Mammary epithelial cell (primary cell): ENCODE measurements at regions of chr7 and their contacts with region 1.

Region 1: GRCh38 chr7:76201730-76202665 is at the start of gene SRRM3:
- DNase-seq: peak; percentile 48
- H3K4me3 ChIP-seq: no peak within 1 kb of the TSS
- H3K27ac ChIP-seq: no peak within 1 kb of the TSS
- H3K4me1 ChIP-seq: no peaks in the 10 kb centered on the region
- H3K27me3 ChIP-seq: no peaks in the 10 kb centered on the region
- CTCF ChIP-seq: peak; percentile 47 to 66
- total RNA-seq, gene SRRM3: 0.17 to 1.3 TPM

Region 2: GRCh38 chr7:75993689-75994387 is 208.2 kb before region 1 on chr7:
- CTCF ChIA-PET with region 1: no interaction called
- dilution Hi-C with region 1: no loop called
- in situ Hi-C with region 1: no loop called
- intact Hi-C with region 1: no loop called
- DNase-seq: peak; percentile 20
- H3K4me3 ChIP-seq: peak overlapping the region; percentile 86 to 92 (median 90)
- H3K27ac ChIP-seq: no peak overlapping the region
- H3K4me1 ChIP-seq: peaks cover 9% of the 10 kb centered on the region
- H3K27me3 ChIP-seq: no peaks in the 10 kb centered on the region
- CTCF ChIP-seq: no peak

Region 3: DNA sequence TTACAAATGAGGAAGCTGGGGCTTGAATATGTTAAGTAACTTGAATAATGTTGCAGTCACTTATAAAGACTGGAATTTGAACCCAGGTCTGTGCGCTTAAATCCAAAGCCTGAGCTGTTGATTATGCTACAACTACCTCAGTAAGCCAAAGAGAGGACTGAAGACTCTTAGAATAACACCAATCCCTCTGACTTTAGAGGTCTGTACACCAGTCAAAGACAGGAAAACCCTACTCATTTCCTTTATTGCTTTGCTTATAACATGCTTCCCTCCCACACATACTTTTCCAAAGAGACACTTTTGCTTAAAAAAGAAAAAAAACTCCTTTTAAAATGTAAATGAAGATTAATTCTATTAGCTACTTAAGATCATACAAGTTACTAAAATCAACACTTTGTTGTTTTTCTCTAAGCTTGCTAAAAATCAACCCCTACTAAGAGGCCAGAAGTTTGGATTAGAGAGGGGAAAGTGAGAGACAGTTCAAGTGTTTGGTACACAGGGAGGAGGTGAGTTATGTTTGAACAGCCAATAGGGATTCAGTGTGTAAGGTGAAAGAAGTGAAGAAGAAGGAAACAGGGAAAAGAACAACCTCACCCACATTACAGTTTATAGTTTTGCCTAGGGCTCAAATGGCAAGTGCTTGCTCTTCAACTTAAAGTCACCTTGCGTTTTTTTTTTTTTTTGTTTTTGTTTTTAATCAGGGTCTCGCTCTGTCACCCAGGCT is 79.3 kb before region 1 on chr7:
- CTCF ChIA-PET with region 1: no interaction called
- dilution Hi-C with region 1: loop called (anchors 10 kb)
- in situ Hi-C with region 1: no loop called
- intact Hi-C with region 1: no loop called
- DNase-seq: no peak
- H3K4me3 ChIP-seq: no peak overlapping the region
- H3K27ac ChIP-seq: no peak overlapping the region
- H3K4me1 ChIP-seq: no peaks in the 10 kb centered on the region
- H3K27me3 ChIP-seq: no peaks in the 10 kb centered on the region
- CTCF ChIP-seq: no peak

Region 4: GRCh38 chr7:76244781-76245391 is 42.9 kb after region 1 on chr7:
- CTCF ChIA-PET with region 1: no interaction called
- dilution Hi-C with region 1: loop called (anchors 5 kb)
- in situ Hi-C with region 1: no loop called
- intact Hi-C with region 1: no loop called
- DNase-seq: no peak
- H3K4me3 ChIP-seq: no peak overlapping the region
- H3K27ac ChIP-seq: no peak overlapping the region
- H3K4me1 ChIP-seq: no peaks in the 10 kb centered on the region
- H3K27me3 ChIP-seq: no peaks in the 10 kb centered on the region
- CTCF ChIP-seq: no peak

Region 5: GRCh38 chr7:76302347-76303201 is 100.6 kb after region 1 on chr7 and contains the start of gene HSPB1:
- CTCF ChIA-PET with region 1: no interaction called
- dilution Hi-C with region 1: loop called (anchors 5 kb)
- in situ Hi-C with region 1: no loop called
- intact Hi-C with region 1: no loop called
- DNase-seq: peak; percentile 95
- H3K4me3 ChIP-seq: peak within 1 kb of the TSS; percentile 65 to 91 (median 78)
- H3K27ac ChIP-seq: peak within 1 kb of the TSS; percentile 66
- H3K4me1 ChIP-seq: peaks cover 57% of the 10 kb centered on the region
- H3K27me3 ChIP-seq: no peaks in the 10 kb centered on the region
- CTCF ChIP-seq: no peak
- total RNA-seq, gene HSPB1: 523 to 862 TPM

Region 6: DNA sequence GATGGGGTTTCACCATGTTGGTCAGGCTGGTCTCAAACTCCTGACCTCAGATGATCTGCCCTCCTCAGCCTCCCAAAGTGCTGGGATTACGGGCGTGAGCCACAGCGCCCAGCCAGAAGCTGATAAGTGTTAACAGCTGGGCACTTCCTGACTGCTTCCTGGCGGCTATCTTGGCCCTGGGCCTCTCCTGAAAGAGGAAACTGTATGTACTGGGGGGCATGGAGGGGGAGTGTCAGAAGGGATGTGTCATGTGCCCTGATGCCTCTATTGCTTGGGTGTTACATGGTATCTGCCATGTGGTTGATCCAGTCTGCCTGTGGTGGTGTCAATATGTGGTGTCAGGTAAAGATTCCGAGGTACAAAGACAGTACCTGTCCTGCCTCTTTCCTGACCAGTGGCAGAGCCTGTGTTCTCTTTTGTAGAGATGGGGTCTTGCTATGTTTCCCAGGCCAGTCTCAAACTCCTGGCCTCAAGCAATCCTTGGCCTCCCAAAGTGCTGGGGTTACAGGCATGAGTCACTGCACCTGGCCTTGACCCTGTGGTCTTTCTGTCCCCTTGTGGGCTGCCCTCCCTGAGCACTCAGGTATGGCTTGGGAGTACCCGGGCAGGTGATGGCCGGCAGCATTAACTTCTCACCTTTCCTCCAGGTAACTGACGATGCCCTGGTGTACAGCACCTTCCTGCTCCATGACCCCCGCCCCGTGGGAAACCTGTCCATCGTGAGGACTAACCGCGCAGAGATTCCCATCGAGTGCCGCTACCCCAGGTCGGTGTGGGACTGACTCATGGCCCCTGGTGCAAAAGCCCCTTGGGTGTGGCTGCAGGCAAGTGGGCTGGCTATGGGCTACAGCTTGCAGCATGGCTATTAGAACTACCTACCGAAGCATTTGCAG is 227.1 kb after region 1 on chr7:
- CTCF ChIA-PET with region 1: no interaction called
- dilution Hi-C with region 1: loop called (anchors 10 kb)
- in situ Hi-C with region 1: no loop called
- intact Hi-C with region 1: no loop called
- DNase-seq: no peak
- H3K4me3 ChIP-seq: no peak overlapping the region
- H3K27ac ChIP-seq: no peak overlapping the region
- H3K4me1 ChIP-seq: peaks cover 14% of the 10 kb centered on the region
- H3K27me3 ChIP-seq: no peaks in the 10 kb centered on the region
- CTCF ChIP-seq: no peak